Activated B cell treated with CpG ODN at 0.5 μM for 24 hours (primary cell): ENCODE measurements at regions of chr22 and their contacts with region 1.

Region 1: GRCh38 chr22:30289134-30289979 is at the start of gene CASTOR1:
- DNase-seq: peak; percentile 90
- ATAC-seq: peak; percentile 85
- H3K4me3 Mint-ChIP-seq: peak within 1 kb of the TSS; percentile 88
- H3K27ac Mint-ChIP-seq: peak within 1 kb of the TSS; percentile 82
- H3K4me1 Mint-ChIP-seq: peaks cover 38% of the 10 kb centered on the region
- H3K27me3 Mint-ChIP-seq: no peaks in the 10 kb centered on the region
- CTCF ChIP-seq: no peak
- total RNA-seq, gene CASTOR1: 2.4 and 3.5 TPM in 2 replicates

Region 2: DNA sequence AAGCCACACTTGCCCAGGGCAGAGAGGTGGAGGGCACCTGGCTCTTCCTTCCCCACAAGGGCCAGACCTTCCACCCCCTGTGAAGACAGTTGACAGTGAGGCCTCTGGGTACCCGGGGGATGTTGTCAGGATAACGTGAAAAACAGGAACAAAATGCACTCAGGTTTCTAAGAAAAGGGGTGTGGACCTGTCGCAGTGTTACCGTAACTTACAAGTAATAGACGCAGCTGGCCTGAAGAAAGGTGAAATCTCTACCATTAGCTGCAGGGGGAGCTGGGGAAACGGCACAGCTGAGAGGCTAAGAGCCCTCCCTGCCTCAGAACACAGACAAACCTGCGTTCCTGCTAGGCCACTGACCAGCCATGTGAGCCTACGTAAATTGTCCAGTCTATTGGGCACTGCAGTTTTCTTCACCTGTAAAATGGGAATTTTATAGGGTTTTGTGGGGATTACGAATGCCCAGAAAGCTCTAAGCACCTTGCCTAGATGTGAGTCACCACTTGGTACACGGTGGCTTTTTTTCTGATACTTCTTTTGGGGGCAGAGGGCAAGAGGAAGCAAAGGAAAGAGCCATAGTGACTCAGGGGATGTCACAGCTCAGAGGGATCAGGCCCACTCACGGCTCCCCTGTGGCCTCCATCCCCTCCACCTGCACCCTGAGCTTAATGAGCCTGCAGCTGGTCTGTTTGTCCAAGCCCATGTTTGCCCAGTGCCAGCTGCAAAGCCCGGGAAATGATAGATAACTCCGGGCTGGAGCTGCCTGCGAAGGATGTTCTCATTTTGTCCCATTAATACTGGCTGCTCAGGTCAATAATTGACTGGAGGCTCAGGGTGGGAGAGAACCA is 588.0 kb before region 1 on chr22:
- CTCF ChIA-PET with region 1: no interaction called
- POLR2A ChIA-PET with region 1: no interaction called
- intact Hi-C with region 1: no loop called
- DNase-seq: no peak
- ATAC-seq: peak; percentile 61
- H3K4me3 Mint-ChIP-seq: no peak overlapping the region
- H3K27ac Mint-ChIP-seq: no peak overlapping the region
- H3K4me1 Mint-ChIP-seq: peaks cover 20% of the 10 kb centered on the region
- H3K27me3 Mint-ChIP-seq: peaks cover 4% of the 10 kb centered on the region
- CTCF ChIP-seq: no peak

Region 3: GRCh38 chr22:30104501-30105156 is 184.7 kb before region 1 on chr22:
- CTCF ChIA-PET with region 1: interaction called, 24 read pairs
- POLR2A ChIA-PET with region 1: no interaction called
- intact Hi-C with region 1: loop called (anchors 1 kb)
- DNase-seq: no peak
- ATAC-seq: no peak
- H3K4me3 Mint-ChIP-seq: no peak overlapping the region
- H3K27ac Mint-ChIP-seq: no peak overlapping the region
- H3K4me1 Mint-ChIP-seq: peaks cover 6% of the 10 kb centered on the region
- H3K27me3 Mint-ChIP-seq: peaks cover 7% of the 10 kb centered on the region
- CTCF ChIP-seq: no peak

Region 4: GRCh38 chr22:30277547-30278344 is 11.6 kb before region 1 on chr22:
- CTCF ChIA-PET with region 1: interaction called, 13 read pairs
- POLR2A ChIA-PET with region 1: no interaction called
- intact Hi-C with region 1: no loop called
- DNase-seq: no peak
- ATAC-seq: no peak
- H3K4me3 Mint-ChIP-seq: no peak overlapping the region
- H3K27ac Mint-ChIP-seq: no peak overlapping the region
- H3K4me1 Mint-ChIP-seq: peaks cover 10% of the 10 kb centered on the region
- H3K27me3 Mint-ChIP-seq: peaks cover 25% of the 10 kb centered on the region
- CTCF ChIP-seq: no peak

Region 5: GRCh38 chr22:30321461-30321860 is 32.1 kb after region 1 on chr22:
- CTCF ChIA-PET with region 1: interaction called, 83 read pairs
- POLR2A ChIA-PET with region 1: interaction called, 92 read pairs
- intact Hi-C with region 1: no loop called
- DNase-seq: no peak
- ATAC-seq: no peak
- H3K4me3 Mint-ChIP-seq: no peak overlapping the region
- H3K27ac Mint-ChIP-seq: no peak overlapping the region
- H3K4me1 Mint-ChIP-seq: peaks cover 70% of the 10 kb centered on the region
- H3K27me3 Mint-ChIP-seq: no peaks in the 10 kb centered on the region
- CTCF ChIP-seq: no peak

Region 6: GRCh38 chr22:30348809-30349208 is 59.5 kb after region 1 on chr22:
- CTCF ChIA-PET with region 1: interaction called, 12 read pairs
- POLR2A ChIA-PET with region 1: no interaction called
- intact Hi-C with region 1: no loop called
- DNase-seq: no peak
- ATAC-seq: no peak
- H3K4me3 Mint-ChIP-seq: no peak overlapping the region
- H3K27ac Mint-ChIP-seq: peak overlapping the region; percentile 53
- H3K4me1 Mint-ChIP-seq: peaks cover 40% of the 10 kb centered on the region
- H3K27me3 Mint-ChIP-seq: no peaks in the 10 kb centered on the region
- CTCF ChIP-seq: no peak

Region 7: GRCh38 chr22:30386960-30387827 is 97.8 kb after region 1 on chr22 and contains the start of gene RNF215:
- CTCF ChIA-PET with region 1: interaction called, 275 read pairs
- POLR2A ChIA-PET with region 1: interaction called, 41 read pairs
- intact Hi-C with region 1: loop called (anchors 1 kb)
- DNase-seq: peak; percentile 94
- ATAC-seq: peak; percentile 85
- H3K4me3 Mint-ChIP-seq: peak within 1 kb of the TSS; percentile 84
- H3K27ac Mint-ChIP-seq: peak within 1 kb of the TSS; percentile 41
- H3K4me1 Mint-ChIP-seq: peaks cover 25% of the 10 kb centered on the region
- H3K27me3 Mint-ChIP-seq: peaks cover 3% of the 10 kb centered on the region
- CTCF ChIP-seq: no peak
- total RNA-seq, gene RNF215: 8.6 and 8.8 TPM in 2 replicates

Region 8: GRCh38 chr22:30591588-30592359 is 302.4 kb after region 1 on chr22 and contains the start of gene PES1:
- CTCF ChIA-PET with region 1: no interaction called
- POLR2A ChIA-PET with region 1: no interaction called
- intact Hi-C with region 1: loop called (anchors 2 kb)
- DNase-seq: peak; percentile 87
- ATAC-seq: peak; percentile 95
- H3K4me3 Mint-ChIP-seq: no peak within 1 kb of the TSS
- H3K27ac Mint-ChIP-seq: no peak within 1 kb of the TSS
- H3K4me1 Mint-ChIP-seq: no peaks in the 10 kb centered on the region
- H3K27me3 Mint-ChIP-seq: peaks cover 1% of the 10 kb centered on the region
- CTCF ChIP-seq: no peak
- total RNA-seq, gene PES1: 124 TPM in 2 replicates

Region 9: GRCh38 chr22:30602049-30602448 is 312.7 kb after region 1 on chr22:
- CTCF ChIA-PET with region 1: no interaction called
- POLR2A ChIA-PET with region 1: no interaction called
- intact Hi-C with region 1: no loop called
- DNase-seq: no peak
- ATAC-seq: no peak
- H3K4me3 Mint-ChIP-seq: no peak overlapping the region
- H3K27ac Mint-ChIP-seq: no peak overlapping the region
- H3K4me1 Mint-ChIP-seq: peaks cover 15% of the 10 kb centered on the region
- H3K27me3 Mint-ChIP-seq: no peaks in the 10 kb centered on the region
- CTCF ChIP-seq: no peak

Region 10: DNA sequence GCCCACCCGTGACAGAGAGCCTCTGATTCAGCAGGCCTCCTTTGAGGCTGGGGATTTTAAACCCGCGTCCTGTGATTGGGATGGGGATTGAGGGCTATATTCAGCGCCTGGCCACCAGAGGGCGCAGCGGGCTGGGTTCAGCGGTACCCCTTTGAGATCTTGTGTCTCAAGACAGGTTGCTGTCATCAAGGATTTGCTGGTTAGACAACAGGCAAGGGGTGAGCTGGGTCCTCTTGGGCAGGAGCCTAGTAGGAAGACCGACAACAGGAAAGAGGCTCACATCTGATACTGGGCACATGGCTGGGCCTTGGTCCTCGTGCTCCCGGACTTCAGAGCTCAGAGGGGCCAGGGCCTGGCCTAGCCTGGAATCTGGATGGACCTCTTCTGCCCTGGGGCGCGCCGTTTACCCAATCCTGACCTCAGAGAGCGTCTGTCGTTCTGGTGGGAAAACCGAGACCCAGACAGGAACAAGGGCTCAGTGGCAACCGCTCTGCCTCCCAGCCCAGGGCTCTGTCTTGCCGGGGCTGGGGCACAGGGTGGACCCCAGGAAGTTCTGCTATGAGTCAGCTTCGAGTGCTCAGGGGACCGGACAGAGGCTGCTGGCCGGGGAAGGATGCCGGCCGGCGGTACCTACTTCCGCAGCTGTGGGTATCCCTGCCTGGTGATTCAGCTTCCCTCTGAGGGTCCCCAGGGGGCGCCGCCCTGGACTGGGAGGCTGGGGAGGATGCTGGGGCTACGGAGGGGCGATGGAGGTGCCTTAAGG is 345.3 kb after region 1 on chr22:
- CTCF ChIA-PET with region 1: no interaction called
- POLR2A ChIA-PET with region 1: no interaction called
- intact Hi-C with region 1: no loop called
- DNase-seq: peak; percentile 83
- ATAC-seq: peak; percentile 57
- H3K4me3 Mint-ChIP-seq: peak overlapping the region; percentile 83
- H3K27ac Mint-ChIP-seq: peak overlapping the region; percentile 88
- H3K4me1 Mint-ChIP-seq: peaks cover 20% of the 10 kb centered on the region
- H3K27me3 Mint-ChIP-seq: no peaks in the 10 kb centered on the region
- CTCF ChIP-seq: no peak